ENCODE measurements at regions of chrX and their contacts with region 1.

Region 1: GRCh38 chrX:98111684-98112083 is 1228.0 kb downstream of the RPA4 start:
- DNase-seq: no peak
- ATAC-seq: no peak
- H3K4me3 ChIP-seq: no peak overlapping the region
- H3K4me3 Mint-ChIP-seq: no peak overlapping the region
- H3K27ac ChIP-seq: no peak overlapping the region
- H3K27ac Mint-ChIP-seq: no peak overlapping the region
- H3K4me1 ChIP-seq: no peaks in the 10 kb centered on the region
- H3K4me1 Mint-ChIP-seq: no peaks in the 10 kb centered on the region
- H3K27me3 ChIP-seq: no peaks in the 10 kb centered on the region
- H3K27me3 Mint-ChIP-seq: no peaks in the 10 kb centered on the region
- CTCF ChIP-seq: no peak

Region 2: DNA sequence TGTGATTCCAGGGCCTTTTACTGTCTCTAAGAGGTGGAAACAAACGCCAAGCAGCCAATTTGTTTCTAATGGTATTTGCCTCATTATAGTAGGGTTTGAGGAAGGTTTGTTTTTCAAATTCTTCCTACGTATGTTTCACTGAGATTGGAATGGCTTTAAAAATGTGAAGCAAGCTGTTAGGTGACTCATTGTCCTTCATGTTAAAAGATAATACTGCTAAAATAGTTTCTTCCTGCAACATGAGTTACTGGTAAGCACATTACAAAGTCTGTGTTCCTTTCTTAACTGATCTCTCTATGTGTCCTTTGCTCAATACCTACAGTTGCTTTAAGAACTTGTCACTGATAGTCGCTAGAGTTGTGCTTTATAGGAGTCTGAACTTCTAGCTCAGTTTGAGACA is 44.1 kb before region 1 on chrX:
- CTCF ChIA-PET with region 1: no interaction called
- POLR2A ChIA-PET with region 1: no interaction called
- intact Hi-C with region 1: loop called in 1 of 2 experiments (anchors 2 kb)
- DNase-seq: no peak
- ATAC-seq: no peak
- H3K4me3 ChIP-seq: no peak overlapping the region
- H3K4me3 Mint-ChIP-seq: no peak overlapping the region
- H3K27ac ChIP-seq: no peak overlapping the region
- H3K27ac Mint-ChIP-seq: no peak overlapping the region
- H3K4me1 ChIP-seq: no peaks in the 10 kb centered on the region
- H3K4me1 Mint-ChIP-seq: no peaks in the 10 kb centered on the region
- H3K27me3 ChIP-seq: no peaks in the 10 kb centered on the region
- H3K27me3 Mint-ChIP-seq: no peaks in the 10 kb centered on the region
- CTCF ChIP-seq: no peak

Measured in CD8-positive, alpha-beta T cell (primary cell).